Lower lobe of right lung (tissue), 2 donors: ENCODE measurements at regions of chr9 and their contacts with region 1.

Region 1: GRCh38 chr9:36166101-36166927 is 2.9 kb upstream of the CCIN start:
- DNase-seq: peak; percentile 88
- ATAC-seq: peak; percentile 96 to 97
- H3K4me3 ChIP-seq: peak overlapping the region; percentile 49
- H3K27ac ChIP-seq: peak overlapping the region; percentile 51
- H3K4me1 ChIP-seq: peaks cover 19% of the 10 kb centered on the region
- H3K27me3 ChIP-seq: no peaks in the 10 kb centered on the region
- CTCF ChIP-seq: peak; percentile 97

Region 2: GRCh38 chr9:35508069-35508468 is 658.2 kb before region 1 on chr9:
- intact Hi-C with region 1: no loop called
- DNase-seq: no peak
- ATAC-seq: no peak
- H3K4me3 ChIP-seq: no peak overlapping the region
- H3K27ac ChIP-seq: no peak overlapping the region
- H3K4me1 ChIP-seq: peaks cover 21% of the 10 kb centered on the region
- H3K27me3 ChIP-seq: no peaks in the 10 kb centered on the region
- CTCF ChIP-seq: no peak

Region 3: DNA sequence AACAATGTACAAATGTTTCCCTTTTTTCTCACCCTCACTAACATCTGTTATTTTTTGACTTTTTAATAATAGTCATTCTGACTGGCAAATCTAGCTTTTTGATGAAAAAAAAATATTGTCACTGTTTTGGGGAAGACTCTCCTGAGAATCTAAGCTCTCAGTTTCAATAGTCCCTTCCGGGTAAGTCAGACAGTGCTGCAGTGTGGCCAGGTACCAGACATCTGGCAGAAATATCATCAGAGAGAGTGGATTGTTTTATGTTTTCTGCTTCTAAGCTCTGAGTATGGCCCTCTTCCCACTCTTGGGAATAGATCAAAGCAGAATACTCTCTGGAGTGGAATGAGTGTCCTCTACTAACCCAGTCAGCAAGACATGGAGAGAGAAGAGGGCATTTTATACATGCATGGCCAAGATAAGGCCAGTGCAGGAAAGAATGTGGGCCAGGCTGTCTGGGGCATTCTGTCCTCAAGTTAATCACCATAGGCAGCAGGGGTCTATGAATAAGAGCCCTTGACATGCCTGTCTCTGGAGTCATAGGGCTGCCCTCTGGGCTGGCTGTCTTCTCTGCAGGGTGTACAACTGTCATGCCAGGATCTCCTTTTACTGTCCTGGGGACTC is 169.8 kb before region 1 on chr9:
- intact Hi-C with region 1: no loop called
- DNase-seq: no peak
- ATAC-seq: peak; percentile 94 to 95
- H3K4me3 ChIP-seq: no peak overlapping the region
- H3K27ac ChIP-seq: peak overlapping the region; percentile 42
- H3K4me1 ChIP-seq: peaks cover 8% of the 10 kb centered on the region
- H3K27me3 ChIP-seq: no peaks in the 10 kb centered on the region
- CTCF ChIP-seq: no peak

Region 4: GRCh38 chr9:36036780-36037548 is 129.3 kb before region 1 on chr9 and contains the start of gene RECK:
- intact Hi-C with region 1: no loop called
- DNase-seq: peak; percentile 91
- ATAC-seq: peak; percentile 96 to 98
- H3K4me3 ChIP-seq: peak within 1 kb of the TSS; percentile 92
- H3K27ac ChIP-seq: peak within 1 kb of the TSS; percentile 81
- H3K4me1 ChIP-seq: peaks cover 44% of the 10 kb centered on the region
- H3K27me3 ChIP-seq: no peaks in the 10 kb centered on the region
- CTCF ChIP-seq: no peak
- total RNA-seq, gene RECK: 15.2 TPM

Region 5: DNA sequence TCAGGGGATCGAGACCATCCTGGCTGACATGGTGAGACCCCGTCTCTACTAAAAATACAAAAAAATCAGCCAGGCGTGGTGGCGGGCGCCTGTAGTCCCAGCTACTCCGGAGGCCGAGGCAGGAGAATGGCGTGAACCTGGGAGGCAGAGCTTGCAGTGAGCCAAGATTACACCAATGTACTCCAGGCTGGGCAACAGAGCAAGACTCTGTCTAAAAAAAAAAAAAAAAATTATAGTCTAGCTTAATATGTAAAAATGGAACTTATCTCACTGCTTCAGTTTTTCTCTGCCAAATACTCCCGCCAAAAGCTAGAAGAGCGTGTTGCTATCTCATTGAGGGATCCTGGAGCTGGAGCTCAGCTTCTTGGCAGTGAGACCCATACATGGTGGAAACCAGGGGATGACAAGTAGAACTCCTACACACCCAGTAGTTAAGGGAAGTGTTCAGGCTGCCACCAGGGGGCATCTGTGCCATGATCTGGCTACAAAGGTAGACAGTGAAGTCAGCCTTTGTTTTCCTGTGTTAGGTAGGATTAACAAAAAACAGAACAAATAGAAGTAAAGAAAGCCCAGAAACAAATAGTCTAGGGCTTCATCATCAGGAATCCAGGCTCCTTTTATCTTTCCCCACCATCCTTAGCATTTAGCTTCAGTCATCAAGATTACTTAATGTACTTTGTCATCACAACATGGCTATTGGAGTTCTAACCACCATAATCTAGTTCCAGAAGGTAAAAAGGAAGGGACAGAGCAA is 63.4 kb before region 1 on chr9:
- intact Hi-C with region 1: loop called (anchors 5 kb)
- DNase-seq: peak; percentile 90
- ATAC-seq: peak; percentile 95 to 98
- H3K4me3 ChIP-seq: no peak overlapping the region
- H3K27ac ChIP-seq: no peak overlapping the region
- H3K4me1 ChIP-seq: peaks cover 9% of the 10 kb centered on the region
- H3K27me3 ChIP-seq: no peaks in the 10 kb centered on the region
- CTCF ChIP-seq: peak; percentile 90